Mammary epithelial cell (primary cell): ENCODE measurements at regions of chr15 and their contacts with region 1.

Region 1: DNA sequence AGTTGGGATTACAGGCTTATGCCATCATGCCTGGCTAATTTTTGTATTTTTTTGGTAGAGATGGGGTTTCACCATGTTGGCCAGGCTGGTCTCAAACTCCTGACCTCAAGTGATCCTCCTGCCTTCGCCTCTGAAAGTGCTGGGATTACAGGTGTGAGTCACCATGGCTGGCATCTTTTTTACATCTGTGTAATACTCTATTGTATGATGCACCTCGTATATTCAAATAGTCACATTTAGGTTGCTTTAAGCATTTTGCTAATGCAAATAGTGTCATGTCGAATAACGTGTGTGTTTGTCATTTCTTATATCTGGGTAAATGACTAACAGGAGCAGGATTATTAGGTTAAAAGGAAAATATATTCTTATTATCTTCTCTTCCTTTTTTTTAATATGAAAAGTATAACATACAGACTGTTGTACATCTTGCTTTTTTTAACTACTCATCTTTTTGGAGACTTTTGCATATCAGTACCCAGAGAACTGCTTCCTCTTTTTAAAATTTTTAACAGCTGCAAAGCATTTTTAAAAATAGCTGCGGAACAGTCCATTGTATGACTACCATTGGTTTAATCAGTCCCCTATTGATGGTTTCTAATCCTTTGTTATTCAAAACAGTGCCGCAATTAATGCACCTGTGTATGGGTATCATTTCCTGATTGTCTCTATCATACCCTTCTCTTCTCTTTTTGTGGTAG is 13.4 kb downstream of the SCAMP5 start:
- DNase-seq: no peak
- H3K4me3 ChIP-seq: no peak overlapping the region
- H3K27ac ChIP-seq: no peak overlapping the region
- H3K4me1 ChIP-seq: no peaks in the 10 kb centered on the region
- H3K27me3 ChIP-seq: no peaks in the 10 kb centered on the region
- CTCF ChIP-seq: no peak

Region 2: DNA sequence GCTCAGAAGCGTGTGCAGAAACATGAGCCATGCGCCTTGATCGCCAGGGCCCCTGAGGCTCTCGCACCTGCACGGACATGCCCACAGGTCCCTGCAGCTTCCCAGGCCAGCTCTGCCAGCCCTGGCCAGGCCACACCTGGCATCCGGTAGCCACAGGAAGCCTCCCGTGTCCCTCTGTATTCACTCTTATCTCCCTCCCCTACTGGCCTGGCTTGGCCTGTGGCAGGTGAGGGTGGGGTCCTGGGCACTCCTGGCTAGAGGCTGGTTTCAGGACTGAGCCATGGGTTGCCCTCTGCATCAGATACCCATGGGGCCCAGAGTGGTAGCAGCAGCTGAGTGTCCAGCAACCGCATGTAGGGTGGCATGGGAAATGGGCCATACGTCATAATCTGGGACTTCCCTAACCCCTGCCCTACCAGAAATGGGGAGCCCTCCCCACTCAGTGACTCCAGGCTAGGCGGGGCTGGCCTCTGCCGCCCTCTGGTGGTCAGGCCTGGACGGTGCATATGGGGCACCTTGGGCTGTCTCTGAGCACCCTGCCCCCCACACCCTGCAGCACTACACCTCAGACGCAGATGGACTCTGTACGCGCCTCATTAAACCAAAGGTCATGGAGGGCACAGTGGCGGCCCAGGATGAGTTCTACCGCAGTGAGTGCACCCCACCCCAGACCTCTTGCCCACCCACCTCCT is 208.8 kb before region 1 on chr15:
- CTCF ChIA-PET with region 1: no interaction called
- dilution Hi-C with region 1: no loop called
- in situ Hi-C with region 1: no loop called
- intact Hi-C with region 1: no loop called
- DNase-seq: peak; percentile 95
- H3K4me3 ChIP-seq: peak overlapping the region in 1 of 3 experiments; percentile 12
- H3K27ac ChIP-seq: peak overlapping the region; percentile 91
- H3K4me1 ChIP-seq: peaks cover 28% of the 10 kb centered on the region
- H3K27me3 ChIP-seq: no peaks in the 10 kb centered on the region
- CTCF ChIP-seq: peak; percentile 96 to 100

Region 3: DNA sequence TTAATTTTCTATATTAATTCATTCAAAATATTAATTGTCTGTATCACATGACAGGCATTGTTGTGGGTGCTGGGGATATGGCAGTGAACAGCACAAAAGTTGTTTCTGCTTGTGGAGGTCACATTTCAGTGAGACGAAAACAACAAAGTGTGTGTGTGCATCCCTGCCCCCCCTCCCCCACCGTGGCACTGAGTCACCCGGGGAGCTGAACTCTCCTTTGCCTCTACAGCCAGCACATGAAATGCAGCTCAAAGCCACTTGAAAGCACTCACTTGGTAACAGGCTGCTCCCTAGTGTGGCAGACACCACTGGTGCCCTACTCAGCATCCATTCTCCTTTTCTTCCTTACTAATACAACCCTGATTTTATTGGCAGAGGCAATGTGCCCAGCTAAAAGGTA is 30.3 kb before region 1 on chr15:
- CTCF ChIA-PET with region 1: no interaction called
- dilution Hi-C with region 1: loop called (anchors 5 kb)
- in situ Hi-C with region 1: no loop called
- intact Hi-C with region 1: no loop called
- DNase-seq: no peak
- H3K4me3 ChIP-seq: no peak overlapping the region
- H3K27ac ChIP-seq: no peak overlapping the region
- H3K4me1 ChIP-seq: no peaks in the 10 kb centered on the region
- H3K27me3 ChIP-seq: no peaks in the 10 kb centered on the region
- CTCF ChIP-seq: no peak